ENCODE measurements at regions of chr21 and their contacts with region 1.

Region 1: GRCh38 chr21:30194701-30195299 is 21.1 kb downstream of the CLDN8 start:
- DNase-seq: peak; percentile 52
- H3K4me3 ChIP-seq: no peak overlapping the region
- H3K27ac ChIP-seq: no peak overlapping the region
- H3K4me1 ChIP-seq: no peaks in the 10 kb centered on the region
- H3K27me3 ChIP-seq: no peaks in the 10 kb centered on the region
- CTCF ChIP-seq: peak; percentile 80 to 86

Region 2: DNA sequence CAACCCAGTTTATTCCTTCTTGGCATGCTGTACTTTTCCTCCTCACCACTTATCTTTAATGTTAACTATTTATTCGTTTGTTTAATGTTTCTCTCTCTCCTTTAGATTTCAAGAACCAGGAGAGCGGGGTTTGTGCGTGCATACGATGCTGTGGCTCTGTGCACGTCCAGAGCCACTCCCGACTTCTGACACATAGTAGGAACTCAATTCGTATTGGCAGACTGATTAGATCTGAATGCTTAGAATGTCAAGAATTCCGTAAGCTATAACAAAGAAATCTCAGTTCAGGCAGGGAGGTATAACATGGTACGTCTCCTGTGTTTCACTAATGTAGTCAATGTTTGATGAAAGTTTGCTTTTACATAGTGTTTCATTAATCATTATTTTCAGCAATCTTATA is 247.7 kb before region 1 on chr21:
- CTCF ChIA-PET with region 1: no interaction called
- dilution Hi-C with region 1: no loop called
- in situ Hi-C with region 1: no loop called
- intact Hi-C with region 1: loop called (anchors 5 kb)
- DNase-seq: no peak
- H3K4me3 ChIP-seq: no peak overlapping the region
- H3K27ac ChIP-seq: no peak overlapping the region
- H3K4me1 ChIP-seq: no peaks in the 10 kb centered on the region
- H3K27me3 ChIP-seq: peaks cover 2% of the 10 kb centered on the region
- CTCF ChIP-seq: no peak

Region 3: DNA sequence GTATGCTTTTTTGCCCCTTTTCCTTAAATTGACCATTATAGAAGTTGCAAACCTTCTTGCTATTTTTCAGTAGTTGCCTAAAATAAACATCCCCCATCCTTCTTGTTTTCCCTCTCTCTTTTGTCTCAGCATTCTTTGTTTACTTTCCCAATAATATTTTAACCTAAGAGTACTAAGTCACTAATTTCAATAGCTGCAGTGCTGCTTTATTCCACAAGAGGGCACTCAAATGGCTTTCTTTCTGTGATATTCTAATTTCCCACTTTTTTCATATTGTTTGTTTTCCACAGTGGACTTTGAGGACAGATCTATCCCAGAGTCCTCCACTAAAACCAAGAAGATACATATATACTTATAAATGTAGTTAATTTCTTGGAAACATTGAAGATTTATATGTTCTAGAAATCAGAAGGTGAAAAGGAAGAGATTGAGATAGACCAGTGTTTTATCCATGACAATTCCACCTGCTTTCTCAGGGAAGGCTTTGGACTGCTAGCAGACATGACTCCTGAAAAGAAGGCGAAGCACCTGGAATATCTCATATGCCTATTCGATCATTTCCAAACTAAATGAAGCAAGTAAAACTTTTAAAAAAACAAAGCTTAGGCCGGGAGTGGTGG is 150.2 kb before region 1 on chr21:
- CTCF ChIA-PET with region 1: interaction called, 6 read pairs
- dilution Hi-C with region 1: no loop called
- in situ Hi-C with region 1: loop called in 1 of 2 experiments (anchors 10 kb)
- intact Hi-C with region 1: loop called (anchors 1 kb)
- DNase-seq: peak; percentile 9
- H3K4me3 ChIP-seq: no peak overlapping the region
- H3K27ac ChIP-seq: no peak overlapping the region
- H3K4me1 ChIP-seq: no peaks in the 10 kb centered on the region
- H3K27me3 ChIP-seq: no peaks in the 10 kb centered on the region
- CTCF ChIP-seq: peak; percentile 82 to 94

Region 4: GRCh38 chr21:30072496-30072895 is 122.3 kb before region 1 on chr21:
- CTCF ChIA-PET with region 1: no interaction called
- dilution Hi-C with region 1: no loop called
- in situ Hi-C with region 1: loop called (anchors 10 kb)
- intact Hi-C with region 1: loop called (anchors 1 kb)
- DNase-seq: peak; percentile 66
- H3K4me3 ChIP-seq: no peak overlapping the region
- H3K27ac ChIP-seq: no peak overlapping the region
- H3K4me1 ChIP-seq: no peaks in the 10 kb centered on the region
- H3K27me3 ChIP-seq: no peaks in the 10 kb centered on the region
- CTCF ChIP-seq: peak; percentile 67 to 78

Region 5: GRCh38 chr21:30146558-30147302 is 48.1 kb before region 1 on chr21:
- CTCF ChIA-PET with region 1: no interaction called
- dilution Hi-C with region 1: no loop called
- in situ Hi-C with region 1: no loop called
- intact Hi-C with region 1: loop called (anchors 5 kb)
- DNase-seq: peak; percentile 93
- H3K4me3 ChIP-seq: no peak overlapping the region
- H3K27ac ChIP-seq: peak overlapping the region; percentile 97
- H3K4me1 ChIP-seq: peaks cover 21% of the 10 kb centered on the region
- H3K27me3 ChIP-seq: no peaks in the 10 kb centered on the region
- CTCF ChIP-seq: no peak

Region 6: DNA sequence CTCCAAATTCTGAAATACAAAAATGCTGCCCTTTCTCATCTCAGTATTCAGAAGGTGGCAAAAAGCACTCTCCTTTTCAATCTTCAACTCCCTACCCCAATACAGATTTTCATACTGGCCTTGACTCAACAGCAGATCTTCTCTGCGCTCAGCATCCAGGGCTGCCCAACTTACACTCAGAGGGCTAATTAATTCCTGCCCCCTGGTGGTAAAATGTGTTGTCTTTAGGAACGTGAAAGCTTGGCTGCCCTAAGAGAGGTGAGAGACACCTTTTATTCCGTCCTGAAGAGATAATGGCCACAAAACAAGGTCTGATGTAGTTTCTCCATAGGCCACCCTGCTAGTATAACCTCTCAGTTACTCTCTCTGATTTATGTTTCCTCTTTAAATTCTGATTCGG is 63.0 kb after region 1 on chr21:
- CTCF ChIA-PET with region 1: no interaction called
- dilution Hi-C with region 1: no loop called
- in situ Hi-C with region 1: no loop called
- intact Hi-C with region 1: loop called (anchors 1 kb)
- DNase-seq: peak; percentile 66
- H3K4me3 ChIP-seq: no peak overlapping the region
- H3K27ac ChIP-seq: no peak overlapping the region
- H3K4me1 ChIP-seq: no peaks in the 10 kb centered on the region
- H3K27me3 ChIP-seq: no peaks in the 10 kb centered on the region
- CTCF ChIP-seq: peak; percentile 55 to 64

Region 7: DNA sequence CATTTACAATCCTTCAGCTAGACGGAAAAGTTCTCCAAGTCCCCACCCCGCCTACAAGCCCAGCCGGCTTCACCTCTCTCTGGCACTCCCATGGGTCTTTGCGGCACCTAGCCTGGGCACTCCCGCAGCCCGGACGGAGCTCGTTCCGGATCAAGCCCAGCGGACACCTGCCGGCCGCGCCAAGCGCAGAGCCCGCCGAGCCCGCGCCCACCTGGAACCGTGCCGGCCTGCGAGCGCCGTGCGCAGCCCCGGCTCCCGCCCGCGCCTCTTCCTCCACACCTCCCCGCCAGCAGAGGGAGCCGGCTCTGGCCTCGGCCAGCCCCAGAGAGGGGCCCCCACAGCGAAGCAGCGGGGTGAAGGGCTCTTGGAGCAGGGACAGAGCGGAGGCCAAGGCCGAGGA is 893.5 kb after region 1 on chr21:
- CTCF ChIA-PET with region 1: no interaction called
- dilution Hi-C with region 1: no loop called
- in situ Hi-C with region 1: no loop called
- intact Hi-C with region 1: loop called (anchors 10 kb)
- DNase-seq: no peak
- H3K4me3 ChIP-seq: no peak overlapping the region
- H3K27ac ChIP-seq: no peak overlapping the region
- H3K4me1 ChIP-seq: no peaks in the 10 kb centered on the region
- H3K27me3 ChIP-seq: no peaks in the 10 kb centered on the region
- CTCF ChIP-seq: no peak